ENCODE measurements at regions of chr6 and their contacts with region 1.

Region 1: GRCh38 chr6:107770541-107770940 is 53.6 kb downstream of the SCML4 start:
- DNase-seq: no peak
- H3K4me3 ChIP-seq: no peak overlapping the region
- H3K27ac ChIP-seq: no peak overlapping the region
- H3K4me1 ChIP-seq: no peaks in the 10 kb centered on the region
- H3K27me3 ChIP-seq: no peaks in the 10 kb centered on the region
- CTCF ChIP-seq: no peak

Region 2: GRCh38 chr6:107353773-107354382 is 416.7 kb before region 1 on chr6:
- CTCF ChIA-PET with region 1: no interaction called
- dilution Hi-C with region 1: no loop called
- in situ Hi-C with region 1: no loop called
- intact Hi-C with region 1: no loop called
- DNase-seq: no peak
- H3K4me3 ChIP-seq: no peak overlapping the region
- H3K27ac ChIP-seq: no peak overlapping the region
- H3K4me1 ChIP-seq: no peaks in the 10 kb centered on the region
- H3K27me3 ChIP-seq: no peaks in the 10 kb centered on the region
- CTCF ChIP-seq: no peak

Region 3: DNA sequence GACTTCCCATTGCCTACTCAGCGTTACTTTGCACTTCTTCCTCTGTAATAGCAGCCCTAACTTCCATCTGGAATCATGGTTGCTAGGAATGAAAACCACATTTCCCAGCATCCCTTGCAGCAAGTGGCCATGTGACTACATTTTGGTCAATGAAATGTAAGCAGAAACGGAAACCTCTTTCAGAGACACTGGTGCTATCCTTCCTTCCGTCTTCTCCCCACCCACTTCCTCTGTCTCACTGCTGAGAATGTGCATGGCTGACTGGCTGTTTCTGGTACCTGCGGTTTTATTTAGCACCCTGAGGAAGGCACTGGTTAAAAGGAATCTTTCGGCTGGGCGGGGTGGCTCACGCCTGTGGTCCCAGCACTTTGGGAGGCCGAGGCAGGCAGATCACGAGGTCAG is 53.9 kb before region 1 on chr6:
- CTCF ChIA-PET with region 1: no interaction called
- dilution Hi-C with region 1: loop called (anchors 5 kb)
- in situ Hi-C with region 1: no loop called
- intact Hi-C with region 1: no loop called
- DNase-seq: no peak
- H3K4me3 ChIP-seq: no peak overlapping the region
- H3K27ac ChIP-seq: no peak overlapping the region
- H3K4me1 ChIP-seq: peaks cover 15% of the 10 kb centered on the region
- H3K27me3 ChIP-seq: no peaks in the 10 kb centered on the region
- CTCF ChIP-seq: no peak

Measured in mammary epithelial cell (primary cell).